SK-N-SH (cell line): ENCODE measurements at regions of chr7 and their contacts with region 1.

Region 1: DNA sequence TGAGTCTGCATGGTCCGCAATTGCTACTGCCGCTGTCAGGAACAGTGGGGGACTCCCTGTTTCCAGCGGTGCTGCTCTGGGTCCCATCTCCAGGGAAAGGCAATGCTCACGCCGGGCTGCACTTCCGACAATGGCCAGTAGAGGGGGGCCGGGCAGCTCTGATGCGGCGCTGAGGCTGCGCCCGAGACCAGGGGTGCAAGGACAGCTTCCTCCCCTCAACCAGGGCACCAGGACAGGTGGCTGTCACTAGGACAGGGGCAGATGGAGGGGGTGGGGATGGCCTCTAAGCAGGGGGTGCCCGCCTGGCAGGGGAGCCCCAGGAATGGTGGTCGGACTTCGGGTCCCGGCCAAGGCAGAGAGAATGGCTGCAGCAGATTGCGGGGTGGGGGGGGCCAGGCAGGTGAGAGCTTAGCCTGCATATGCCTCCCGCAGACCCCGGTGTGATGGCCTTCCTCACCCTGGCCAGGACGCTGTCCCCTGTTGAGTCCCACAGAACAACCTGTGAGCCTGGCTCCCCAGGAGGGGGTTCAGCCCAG is 71.0 kb upstream of the KCTD7 start:
- DNase-seq: peak; percentile 96
- H3K4me3 ChIP-seq: peak overlapping the region in 1 of 2 experiments; percentile 35; a peak in 1 of 4 replicates
- H3K27ac ChIP-seq: no peak overlapping the region
- H3K4me1 ChIP-seq: peaks cover 0 to 9% of the 10 kb centered on the region in 2 experiments; a peak in 1 of 4 replicates
- H3K27me3 ChIP-seq: no peaks in the 10 kb centered on the region
- CTCF ChIP-seq: peak; percentile 98
- EP300 ChIP-seq: no peak
- RAD21 ChIP-seq: peak; percentile 93

Region 2: GRCh38 chr7:66413379-66414114 is 144.1 kb before region 1 on chr7:
- CTCF ChIA-PET with region 1: no interaction called
- POLR2A ChIA-PET with region 1: no interaction called
- DNase-seq: peak; percentile 100
- H3K4me3 ChIP-seq: peak overlapping the region; percentile 52 to 60
- H3K27ac ChIP-seq: no peak overlapping the region
- H3K4me1 ChIP-seq: peaks cover 4 to 9% of the 10 kb centered on the region in 2 experiments; a peak in 2 of 4 replicates
- H3K27me3 ChIP-seq: no peaks in the 10 kb centered on the region
- CTCF ChIP-seq: peak; percentile 63
- EP300 ChIP-seq: no peak
- RAD21 ChIP-seq: peak; percentile 53

Region 3: GRCh38 chr7:66535414-66536329 is 22.0 kb before region 1 on chr7:
- CTCF ChIA-PET with region 1: interaction called, 26 read pairs
- POLR2A ChIA-PET with region 1: no interaction called
- DNase-seq: no peak
- H3K4me3 ChIP-seq: no peak overlapping the region
- H3K27ac ChIP-seq: no peak overlapping the region
- H3K4me1 ChIP-seq: no peaks in the 10 kb centered on the region
- H3K27me3 ChIP-seq: no peaks in the 10 kb centered on the region
- CTCF ChIP-seq: no peak
- EP300 ChIP-seq: no peak
- RAD21 ChIP-seq: no peak

Region 4: GRCh38 chr7:66571568-66571967 is 13.9 kb after region 1 on chr7:
- CTCF ChIA-PET with region 1: interaction called, 19 read pairs
- POLR2A ChIA-PET with region 1: interaction called, 3 read pairs
- DNase-seq: no peak
- H3K4me3 ChIP-seq: no peak overlapping the region
- H3K27ac ChIP-seq: no peak overlapping the region
- H3K4me1 ChIP-seq: no peaks in the 10 kb centered on the region
- H3K27me3 ChIP-seq: no peaks in the 10 kb centered on the region
- CTCF ChIP-seq: no peak
- EP300 ChIP-seq: no peak
- RAD21 ChIP-seq: no peak

Region 5: DNA sequence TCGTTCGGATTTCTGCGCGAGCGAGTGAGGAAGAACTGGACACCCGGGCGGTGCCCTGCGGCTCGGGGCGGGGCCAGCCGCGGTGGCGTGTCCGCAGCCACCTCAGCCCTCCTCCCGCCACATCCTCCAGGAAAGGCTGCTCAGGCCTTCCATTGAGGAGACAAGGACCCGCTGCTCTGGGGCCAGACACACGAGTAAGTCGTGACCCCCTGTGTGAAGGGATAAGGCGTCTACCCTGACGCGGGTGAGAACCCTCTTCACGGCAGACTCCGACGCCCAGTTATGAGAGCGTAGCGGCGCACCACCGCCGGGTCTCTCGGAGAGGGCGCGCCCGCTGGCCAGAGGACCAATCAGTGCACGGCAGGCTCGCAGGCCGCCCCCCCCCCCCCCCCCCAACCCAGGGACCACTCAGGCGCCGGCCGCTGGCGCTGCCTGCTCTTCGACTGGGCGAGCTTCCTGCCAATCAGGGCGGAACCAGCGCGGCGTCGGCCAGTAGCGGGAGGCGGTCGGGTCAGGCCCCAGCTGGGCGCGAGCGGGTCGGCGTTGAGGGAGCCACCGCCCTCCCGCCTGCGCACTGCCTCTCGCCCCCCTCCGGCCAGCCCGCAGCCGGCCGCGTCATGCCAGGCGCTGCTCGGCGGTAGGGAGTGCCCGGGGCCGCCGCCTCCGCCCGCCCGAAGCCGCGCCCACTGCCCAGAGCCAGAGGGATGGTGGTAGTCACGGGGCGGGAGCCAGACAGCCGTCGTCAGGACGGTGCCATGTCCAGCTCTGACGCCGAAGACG is 70.9 kb after region 1 on chr7 and contains the start of gene KCTD7:
- CTCF ChIA-PET with region 1: interaction called, 16 read pairs
- POLR2A ChIA-PET with region 1: interaction called, 4 read pairs
- DNase-seq: peak; percentile 100
- H3K4me3 ChIP-seq: peak within 1 kb of the TSS; percentile 64 to 94
- H3K27ac ChIP-seq: peak within 1 kb of the TSS; percentile 90 to 94
- H3K4me1 ChIP-seq: peaks cover 0 to 15% of the 10 kb centered on the region in 2 experiments; a peak in 1 of 4 replicates
- H3K27me3 ChIP-seq: no peaks in the 10 kb centered on the region
- CTCF ChIP-seq: no peak
- EP300 ChIP-seq: no peak
- RAD21 ChIP-seq: no peak
- polyA plus RNA-seq, gene KCTD7: 19.5 and 27.4 TPM in 2 replicates

Region 6: DNA sequence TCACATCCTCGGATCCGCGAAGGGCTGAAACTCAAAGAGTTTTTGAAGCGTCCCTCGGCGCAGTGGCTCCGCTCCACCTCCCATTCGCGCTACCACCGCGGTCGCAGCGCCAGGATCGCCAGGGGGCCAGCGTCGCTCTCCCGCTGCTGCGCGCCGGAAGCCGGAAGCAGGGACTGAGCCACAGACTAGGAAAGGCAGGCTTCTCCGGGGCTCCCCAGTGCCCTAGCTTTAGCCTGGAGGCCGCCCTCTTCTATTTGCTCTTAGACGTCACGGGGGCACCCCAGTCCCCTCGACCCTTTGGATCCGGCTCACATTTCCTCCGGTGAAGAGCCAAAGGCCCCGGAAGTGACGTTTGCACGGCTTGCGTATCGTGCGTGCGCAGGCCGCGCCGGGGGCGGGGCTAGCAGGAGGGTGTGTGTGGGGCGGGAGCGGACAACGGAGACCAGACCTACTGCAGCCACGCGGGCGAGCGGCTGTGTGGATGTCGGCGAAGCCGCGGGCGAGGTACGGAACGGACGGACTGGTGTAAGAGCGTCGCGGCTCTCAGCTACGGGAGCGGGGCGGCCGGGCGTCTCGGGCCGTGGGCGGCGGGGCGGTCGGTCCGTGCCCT is 96.6 kb after region 1 on chr7:
- CTCF ChIA-PET with region 1: interaction called, 10 read pairs
- POLR2A ChIA-PET with region 1: interaction called, 4 read pairs
- DNase-seq: peak; percentile 100
- H3K4me3 ChIP-seq: peak overlapping the region; percentile 67 to 99
- H3K27ac ChIP-seq: peak overlapping the region; percentile 93 to 98
- H3K4me1 ChIP-seq: peaks cover 0 to 10% of the 10 kb centered on the region in 2 experiments; a peak in 2 of 4 replicates
- H3K27me3 ChIP-seq: no peaks in the 10 kb centered on the region
- CTCF ChIP-seq: no peak; the same call in 1 of the 2 replicates
- EP300 ChIP-seq: 0 out of 4 replicates have a peak, but pooled peaks of 1 of the 2 experiments have one; percentile 29
- RAD21 ChIP-seq: no peak